Activated B cell treated with CpG ODN at 0.5 μM for 24 hours (primary cell): ENCODE measurements at regions of chr2 and their contacts with region 1.

Region 1: GRCh38 chr2:171574149-171574795 is 52.0 kb downstream of the CYBRD1 start:
- DNase-seq: peak; percentile 81
- ATAC-seq: peak; percentile 100
- H3K4me3 Mint-ChIP-seq: no peak overlapping the region
- H3K27ac Mint-ChIP-seq: peak overlapping the region; percentile 16
- H3K4me1 Mint-ChIP-seq: peaks cover 5% of the 10 kb centered on the region
- H3K27me3 Mint-ChIP-seq: no peaks in the 10 kb centered on the region
- CTCF ChIP-seq: peak; percentile 76

Region 2: DNA sequence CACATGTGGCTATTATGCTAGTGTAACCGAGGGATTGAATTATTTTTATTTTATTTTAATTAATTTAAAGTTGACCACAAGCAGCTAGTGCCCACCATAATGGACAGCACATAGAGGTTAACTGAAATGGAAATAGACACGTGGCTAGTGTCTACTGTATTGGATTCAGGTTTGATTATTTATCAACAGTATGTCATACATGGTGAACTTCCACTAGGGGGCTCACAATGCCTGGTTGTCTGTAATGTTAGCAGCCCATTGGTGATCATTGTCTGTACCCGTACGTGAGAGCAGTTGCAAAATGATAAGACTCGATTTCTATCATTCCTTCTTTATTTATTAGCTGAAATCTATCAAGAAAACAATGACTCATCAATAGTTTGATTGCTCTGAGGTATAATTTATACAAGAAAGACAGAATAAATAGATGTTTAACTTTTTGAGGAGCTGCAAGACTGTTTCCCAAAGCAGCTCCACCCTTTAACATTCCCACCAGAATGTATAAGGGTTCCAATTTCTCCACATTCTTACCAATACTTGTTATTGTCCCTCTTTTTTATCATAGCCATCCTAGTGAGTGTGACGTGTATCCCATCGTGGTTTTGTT is 24.5 kb after region 1 on chr2:
- CTCF ChIA-PET with region 1: interaction called, 3 read pairs
- POLR2A ChIA-PET with region 1: no interaction called
- intact Hi-C with region 1: loop called (anchors 1 kb)
- DNase-seq: no peak
- ATAC-seq: peak; percentile 96
- H3K4me3 Mint-ChIP-seq: no peak overlapping the region
- H3K27ac Mint-ChIP-seq: no peak overlapping the region
- H3K4me1 Mint-ChIP-seq: peaks cover 3% of the 10 kb centered on the region
- H3K27me3 Mint-ChIP-seq: peaks cover 4% of the 10 kb centered on the region
- CTCF ChIP-seq: no peak

Region 3: DNA sequence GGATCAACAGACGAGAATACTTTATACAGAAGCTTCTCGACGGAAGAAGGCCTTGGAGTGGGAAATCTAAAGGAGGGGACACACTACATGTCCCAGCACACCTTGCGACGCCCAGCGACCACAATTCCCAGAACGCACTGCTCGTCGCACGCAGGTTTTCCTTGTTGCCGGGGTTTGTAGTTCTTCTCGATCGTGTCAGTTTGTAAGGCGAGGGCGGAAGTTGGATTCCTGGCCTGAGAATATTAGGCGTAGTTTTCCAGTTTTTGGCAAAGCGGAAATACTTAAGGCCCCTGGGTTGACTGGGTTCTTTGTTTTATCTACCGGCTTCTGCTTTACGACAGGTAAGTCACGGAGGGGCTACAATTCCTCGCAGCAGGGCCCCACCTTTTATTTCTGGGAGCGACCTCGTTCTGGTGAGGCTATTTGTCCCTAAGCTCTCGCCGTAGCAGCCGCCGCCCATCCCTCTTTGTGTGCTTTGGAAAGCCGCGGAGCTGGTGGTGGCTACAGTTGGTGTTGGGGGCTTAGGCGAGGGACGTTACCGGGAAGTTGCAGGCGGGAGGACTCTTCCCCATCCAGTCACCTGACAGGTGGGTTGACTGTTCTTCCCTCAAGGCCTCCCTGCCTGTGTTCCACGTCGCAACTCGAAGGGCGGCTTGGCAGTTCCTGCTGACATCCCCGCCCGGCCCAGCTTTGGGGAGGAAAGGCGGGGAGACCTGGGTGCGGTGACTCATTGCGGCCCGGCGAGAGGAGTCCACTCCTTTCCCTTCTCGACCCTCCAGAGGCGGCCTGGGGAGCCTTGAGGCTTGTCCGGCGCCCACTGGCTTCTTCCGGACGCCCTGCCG is 113.2 kb after region 1 on chr2 and contains the start of gene DYNC1I2:
- CTCF ChIA-PET with region 1: no interaction called
- POLR2A ChIA-PET with region 1: no interaction called
- intact Hi-C with region 1: loop called (anchors 2 kb)
- DNase-seq: peak; percentile 70
- ATAC-seq: peak; percentile 87
- H3K4me3 Mint-ChIP-seq: peak within 1 kb of the TSS; percentile 95
- H3K27ac Mint-ChIP-seq: peak within 1 kb of the TSS; percentile 88
- H3K4me1 Mint-ChIP-seq: peaks cover 17% of the 10 kb centered on the region
- H3K27me3 Mint-ChIP-seq: peaks cover 2% of the 10 kb centered on the region
- CTCF ChIP-seq: no peak
- total RNA-seq, gene DYNC1I2: 52.0 and 54.6 TPM in 2 replicates

Region 4: DNA sequence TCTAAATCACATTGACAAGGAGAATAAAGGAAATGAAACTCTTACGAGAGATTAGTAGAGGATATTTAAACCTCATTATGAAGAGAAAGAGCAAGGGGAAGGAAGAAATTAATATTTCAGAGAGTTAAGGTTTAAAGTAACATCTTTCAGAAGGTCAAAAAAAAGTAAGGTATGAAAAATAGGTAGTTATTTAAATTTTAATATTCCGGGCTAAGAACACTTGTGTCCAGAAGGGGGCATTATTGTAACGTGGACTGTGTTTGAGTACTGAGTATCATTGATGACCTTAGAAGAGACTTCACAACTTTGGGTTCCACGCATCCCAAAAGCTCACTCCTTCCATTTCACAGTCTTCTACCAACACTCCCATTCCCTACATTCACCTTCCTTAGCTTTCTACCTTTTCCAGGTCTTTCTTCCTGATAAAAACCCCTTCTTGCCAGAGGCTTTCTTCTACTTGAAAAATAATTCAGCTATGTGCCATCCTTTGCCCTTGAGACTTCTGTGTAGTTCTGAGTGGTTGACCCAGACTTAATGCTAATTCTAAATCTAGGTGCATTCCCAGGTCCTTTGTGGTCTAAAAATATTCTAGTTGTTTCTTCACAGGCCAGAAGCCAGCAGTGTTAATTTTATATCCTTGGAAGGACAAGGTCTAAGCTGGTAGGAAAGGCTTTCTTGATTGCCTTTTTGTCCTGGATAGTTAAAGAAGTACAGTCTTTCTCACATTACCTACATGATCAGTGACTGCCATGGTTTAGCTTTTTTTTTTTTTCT is 129.5 kb after region 1 on chr2:
- CTCF ChIA-PET with region 1: no interaction called
- POLR2A ChIA-PET with region 1: no interaction called
- intact Hi-C with region 1: loop called (anchors 2 kb)
- DNase-seq: no peak
- ATAC-seq: no peak
- H3K4me3 Mint-ChIP-seq: no peak overlapping the region
- H3K27ac Mint-ChIP-seq: no peak overlapping the region
- H3K4me1 Mint-ChIP-seq: peaks cover 18% of the 10 kb centered on the region
- H3K27me3 Mint-ChIP-seq: no peaks in the 10 kb centered on the region
- CTCF ChIP-seq: no peak

Region 5: GRCh38 chr2:172113617-172114016 is 539.3 kb after region 1 on chr2:
- CTCF ChIA-PET with region 1: interaction called, 3 read pairs
- POLR2A ChIA-PET with region 1: no interaction called
- intact Hi-C with region 1: loop called (anchors 1 kb)
- DNase-seq: no peak
- ATAC-seq: no peak
- H3K4me3 Mint-ChIP-seq: no peak overlapping the region
- H3K27ac Mint-ChIP-seq: no peak overlapping the region
- H3K4me1 Mint-ChIP-seq: no peaks in the 10 kb centered on the region
- H3K27me3 Mint-ChIP-seq: peaks cover 28% of the 10 kb centered on the region
- CTCF ChIP-seq: no peak

Region 6: GRCh38 chr2:172131713-172132555 is 557.7 kb after region 1 on chr2:
- CTCF ChIA-PET with region 1: interaction called, 6 read pairs
- POLR2A ChIA-PET with region 1: no interaction called
- intact Hi-C with region 1: loop called (anchors 1 kb)
- DNase-seq: no peak
- ATAC-seq: no peak
- H3K4me3 Mint-ChIP-seq: no peak overlapping the region
- H3K27ac Mint-ChIP-seq: no peak overlapping the region
- H3K4me1 Mint-ChIP-seq: no peaks in the 10 kb centered on the region
- H3K27me3 Mint-ChIP-seq: peaks cover 12% of the 10 kb centered on the region
- CTCF ChIP-seq: no peak

Region 7: DNA sequence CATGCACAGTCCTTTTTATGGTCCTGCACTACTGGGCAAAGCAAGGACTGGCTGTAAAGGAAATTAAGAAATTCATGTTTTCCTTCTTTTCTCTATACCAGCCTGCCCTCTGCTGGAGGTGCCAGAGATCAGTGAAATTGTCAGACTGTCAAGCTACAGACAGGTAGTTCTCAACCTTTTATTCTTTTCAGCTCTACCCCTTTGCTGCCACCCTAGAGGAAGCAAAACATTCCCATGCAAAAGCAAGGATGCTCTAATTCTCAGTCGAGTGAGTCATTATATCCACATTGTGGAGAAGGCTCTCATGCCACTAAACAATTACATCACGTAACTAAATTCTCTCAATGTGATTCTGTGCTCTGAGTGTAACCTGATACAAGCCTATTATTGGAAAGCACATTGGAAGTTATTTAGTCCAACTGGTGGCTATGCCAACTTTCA is 1136.3 kb after region 1 on chr2:
- CTCF ChIA-PET with region 1: no interaction called
- POLR2A ChIA-PET with region 1: no interaction called
- intact Hi-C with region 1: loop called (anchors 1 kb)
- DNase-seq: no peak
- ATAC-seq: no peak
- H3K4me3 Mint-ChIP-seq: no peak overlapping the region
- H3K27ac Mint-ChIP-seq: no peak overlapping the region
- H3K4me1 Mint-ChIP-seq: no peaks in the 10 kb centered on the region
- H3K27me3 Mint-ChIP-seq: peaks cover 2% of the 10 kb centered on the region
- CTCF ChIP-seq: no peak